ENCODE measurements at regions of chr9 and their contacts with region 1.

Region 1: DNA sequence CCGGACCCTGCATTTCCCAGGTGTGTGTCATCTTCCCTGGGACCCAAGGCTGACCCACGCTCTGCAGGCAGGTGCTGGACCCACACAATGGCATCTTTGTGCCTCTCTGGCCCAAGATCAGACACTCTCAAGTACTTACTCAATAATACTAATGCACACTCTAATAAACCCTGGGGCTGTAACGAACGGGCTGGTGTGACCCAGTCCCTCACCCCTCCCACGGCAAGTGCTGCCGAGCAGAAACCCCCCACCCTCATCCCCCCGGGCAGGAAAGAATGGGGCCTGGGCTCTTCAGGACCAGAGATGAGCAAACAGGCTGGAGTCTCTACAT is 1.1 kb upstream of the OBP2B start:
- DNase-seq: no peak
- H3K4me3 ChIP-seq: no peak overlapping the region
- H3K27ac ChIP-seq: no peak overlapping the region
- H3K4me1 ChIP-seq: no peaks in the 10 kb centered on the region
- H3K27me3 ChIP-seq: no peaks in the 10 kb centered on the region
- CTCF ChIP-seq: no peak
- POLR2A ChIP-seq: no peak

Region 2: DNA sequence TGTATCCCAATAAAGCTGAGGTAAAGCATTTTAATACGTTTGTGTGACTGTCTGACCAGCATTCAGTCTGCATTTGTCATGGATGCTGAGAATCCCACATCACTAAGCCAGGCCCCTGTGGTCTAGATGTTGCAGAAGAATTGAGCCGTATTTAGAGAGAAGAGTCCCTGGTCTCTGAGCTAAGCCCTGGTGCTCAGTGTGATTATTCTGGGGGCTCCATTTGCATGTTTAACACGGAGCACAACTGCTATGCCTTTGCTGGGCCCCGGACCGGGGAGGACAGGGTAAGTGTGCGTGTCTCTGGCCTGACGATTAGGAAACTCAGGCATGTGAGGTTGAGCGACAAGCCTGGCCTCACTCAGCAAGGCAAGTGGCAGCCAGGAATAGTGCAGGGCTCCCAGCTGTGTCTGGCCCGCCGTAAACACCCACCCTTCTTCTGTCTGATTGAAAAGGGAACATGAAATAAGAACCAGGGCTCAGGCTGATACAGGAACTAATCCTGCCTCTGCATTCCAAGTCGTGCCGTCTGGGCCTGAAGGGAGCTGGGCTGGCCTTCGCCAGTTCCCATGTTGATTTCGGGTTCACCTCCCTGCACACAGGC is 1956.2 kb before region 1 on chr9:
- intact Hi-C with region 1: loop called (anchors 10 kb)
- DNase-seq: no peak
- H3K4me3 ChIP-seq: no peak overlapping the region
- H3K27ac ChIP-seq: no peak overlapping the region
- H3K4me1 ChIP-seq: no peaks in the 10 kb centered on the region
- H3K27me3 ChIP-seq: no peaks in the 10 kb centered on the region
- CTCF ChIP-seq: no peak
- POLR2A ChIP-seq: no peak

Measured in uterus (tissue), 4 donors.